ENCODE measurements at regions of chr14 and their contacts with region 1.

Region 1: GRCh38 chr14:27085500-27085899 is 487.7 kb upstream of the NOVA1 start:
- DNase-seq: no peak
- ATAC-seq: no peak
- H3K4me3 ChIP-seq: no peak overlapping the region
- H3K27ac ChIP-seq: no peak overlapping the region
- H3K4me1 ChIP-seq: no peaks in the 10 kb centered on the region
- H3K27me3 ChIP-seq: no peaks in the 10 kb centered on the region
- CTCF ChIP-seq: no peak

Region 2: GRCh38 chr14:27065886-27066285 is 19.6 kb before region 1 on chr14:
- intact Hi-C with region 1: loop called in 1 of 2 experiments (anchors 1 kb)
- DNase-seq: no peak
- ATAC-seq: no peak
- H3K4me3 ChIP-seq: no peak overlapping the region
- H3K27ac ChIP-seq: no peak overlapping the region
- H3K4me1 ChIP-seq: no peaks in the 10 kb centered on the region
- H3K27me3 ChIP-seq: no peaks in the 10 kb centered on the region
- CTCF ChIP-seq: no peak

Region 3: GRCh38 chr14:27148143-27148542 is 62.6 kb after region 1 on chr14:
- intact Hi-C with region 1: no loop called
- DNase-seq: no peak
- ATAC-seq: no peak
- H3K4me3 ChIP-seq: no peak overlapping the region
- H3K27ac ChIP-seq: no peak overlapping the region
- H3K4me1 ChIP-seq: no peaks in the 10 kb centered on the region
- H3K27me3 ChIP-seq: no peaks in the 10 kb centered on the region
- CTCF ChIP-seq: no peak

Measured in psoas muscle (tissue), 8 donors.